ENCODE measurements at regions of chr22 and their contacts with region 1.

Region 1: DNA sequence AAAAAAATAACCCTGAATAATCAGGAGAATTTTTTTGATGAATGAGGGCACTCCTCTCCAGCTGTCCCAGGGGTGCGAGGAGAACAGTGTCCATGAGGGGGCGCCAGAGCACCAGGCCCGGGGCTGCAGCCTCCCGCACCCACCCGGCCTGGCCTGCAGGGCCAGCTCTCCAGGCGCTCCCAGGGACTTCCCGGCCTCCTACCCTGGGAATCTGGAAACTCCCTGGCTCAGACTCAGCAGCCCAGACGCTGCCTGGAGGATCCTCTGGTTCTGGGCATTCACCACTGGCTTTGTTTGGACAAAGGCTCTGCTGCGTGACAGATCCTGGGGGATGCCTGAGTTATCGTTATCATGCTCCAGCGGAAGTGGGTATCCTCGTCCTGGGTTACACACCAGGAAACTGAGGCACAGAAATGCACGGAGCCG is 31.0 kb downstream of the MCM5 start:
- DNase-seq: peak; percentile 49 to 98
- H3K4me3 ChIP-seq: no peak overlapping the region
- H3K27ac ChIP-seq: no peak overlapping the region
- H3K4me1 ChIP-seq: peaks cover under 1 to 10% (median 3%) of the 10 kb centered on the region in 4 experiments; a peak in 6 of 7 replicates
- H3K27me3 ChIP-seq: no peaks in the 10 kb centered on the region
- CTCF ChIP-seq: peak; percentile 85 to 98 (median 90)
- EP300 ChIP-seq: no peak
- POLR2A ChIP-seq: no peak
- RAD21 ChIP-seq: peak; percentile 96 to 97

Region 2: DNA sequence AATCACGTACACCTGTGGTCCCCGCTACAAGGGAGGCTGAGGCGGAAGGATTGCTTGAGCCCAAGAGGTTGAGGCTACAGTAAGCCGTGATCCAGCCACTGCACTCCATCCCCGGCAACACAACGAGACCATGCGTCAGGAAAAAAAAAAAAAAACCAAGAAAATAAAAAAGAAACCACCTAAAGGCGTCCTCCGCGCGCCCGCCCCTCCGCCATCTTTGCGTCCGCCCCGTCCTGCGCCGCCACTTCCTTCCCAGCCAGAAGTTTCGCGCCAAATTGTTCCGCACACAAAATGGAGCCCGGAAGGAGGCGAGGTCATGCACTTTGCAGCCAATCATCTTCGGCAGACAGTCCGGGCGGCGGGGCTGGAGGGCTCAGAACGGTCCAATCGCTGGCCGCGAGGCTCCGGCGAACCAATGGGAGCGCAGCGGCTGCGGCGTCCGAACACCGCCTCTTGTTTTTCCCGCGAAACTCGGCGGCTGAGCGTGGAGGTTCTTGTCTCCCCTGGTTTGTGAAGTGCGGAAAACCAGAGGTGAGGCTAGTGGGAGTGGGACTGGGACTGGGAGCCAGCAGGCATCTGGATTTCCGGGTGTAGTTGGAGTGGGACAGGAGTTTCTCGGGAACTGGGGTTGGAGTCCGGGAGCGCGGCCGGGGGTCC is 31.1 kb before region 1 on chr22 and contains the start of gene MCM5:
- CTCF ChIA-PET with region 1: interaction called, 122 read pairs
- POLR2A ChIA-PET with region 1: interaction called, 1,995 read pairs
- DNase-seq: peak; percentile 89 to 95
- H3K4me3 ChIP-seq: peak within 1 kb of the TSS; percentile 83 to 98 (median 90)
- H3K27ac ChIP-seq: peak within 1 kb of the TSS; percentile 98
- H3K4me1 ChIP-seq: peaks cover 8 to 25% (median 13%) of the 10 kb centered on the region in 4 experiments
- H3K27me3 ChIP-seq: no peaks in the 10 kb centered on the region
- CTCF ChIP-seq: no peak
- EP300 ChIP-seq: peak in 1 of 2 experiments; percentile 21; a peak in 1 of 3 replicates
- POLR2A ChIP-seq: peak; percentile 86 to 95
- RAD21 ChIP-seq: no peak
- total RNA-seq, gene MCM5: 297 and 305 TPM in 2 replicates

Region 3: GRCh38 chr22:35409783-35410662 is 20.9 kb before region 1 on chr22:
- CTCF ChIA-PET with region 1: interaction called, 122 read pairs
- POLR2A ChIA-PET with region 1: interaction called, 1,995 read pairs
- DNase-seq: no peak
- H3K4me3 ChIP-seq: no peak overlapping the region
- H3K27ac ChIP-seq: no peak overlapping the region
- H3K4me1 ChIP-seq: no peaks in the 10 kb centered on the region
- H3K27me3 ChIP-seq: no peaks in the 10 kb centered on the region
- CTCF ChIP-seq: no peak
- EP300 ChIP-seq: no peak
- POLR2A ChIP-seq: no peak; a peak in 1 of 3 replicates
- RAD21 ChIP-seq: no peak

Measured in H1 (cell line).